Heart left ventricle (tissue), 16 donors: ENCODE measurements at regions of chr5 and their contacts with region 1.

Region 1: GRCh38 chr5:142548739-142549275 is 137.1 kb downstream of the FGF1 start:
- DNase-seq: peak in 4 of 5 donors; percentile 41 to 66 (median 60)
- ATAC-seq: peak; percentile 74 to 94 (median 86)
- H3K4me3 ChIP-seq: no peak overlapping the region
- H3K27ac ChIP-seq: peak overlapping the region in 2 of 12 donors; percentile 21 to 31
- H3K4me1 ChIP-seq: peaks cover 0 to 49% (median 20%) of the 10 kb centered on the region in 12 donors
- H3K27me3 ChIP-seq: peaks cover 0 to 27% (median 0%) of the 10 kb centered on the region in 9 donors
- CTCF ChIP-seq: peak; percentile 64 to 91 (median 78)
- POLR2A ChIP-seq: no peak

Region 2: DNA sequence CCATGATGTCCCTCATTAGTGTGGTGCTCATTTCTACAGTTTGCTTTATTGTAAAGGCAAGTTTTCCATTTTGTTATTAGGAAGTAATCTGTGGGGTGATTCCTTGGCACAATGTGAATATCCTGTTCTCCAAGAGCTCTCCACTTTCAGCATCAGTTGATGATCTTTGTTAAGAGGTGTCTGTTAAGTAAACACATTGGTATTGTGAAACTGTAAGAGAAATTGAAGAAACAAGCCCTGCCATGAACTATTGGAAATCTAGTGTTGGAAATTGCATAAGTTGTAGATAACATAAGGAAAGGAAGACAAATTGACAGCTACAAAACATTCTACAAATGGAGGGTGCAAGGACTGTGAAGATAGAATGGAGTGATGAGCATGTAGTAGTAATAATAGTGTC is 562.7 kb before region 1 on chr5:
- intact Hi-C with region 1: loop called in 3 of 10 experiments (anchors 10 kb)
- DNase-seq: no peak
- ATAC-seq: no peak
- H3K4me3 ChIP-seq: no peak overlapping the region
- H3K27ac ChIP-seq: no peak overlapping the region
- H3K4me1 ChIP-seq: no peaks in the 10 kb centered on the region
- H3K27me3 ChIP-seq: no peaks in the 10 kb centered on the region
- CTCF ChIP-seq: no peak
- POLR2A ChIP-seq: no peak

Region 3: GRCh38 chr5:142151436-142152383 is 397.1 kb before region 1 on chr5:
- intact Hi-C with region 1: loop called (anchors 1 to 5 kb)
- DNase-seq: peak in 3 of 5 donors; percentile 41 to 63 (median 52)
- ATAC-seq: peak in 3 of 4 donors; percentile 65 to 70 (median 66)
- H3K4me3 ChIP-seq: no peak overlapping the region
- H3K27ac ChIP-seq: peak overlapping the region in 1 of 12 donors; percentile 14
- H3K4me1 ChIP-seq: peaks cover 0 to 10% (median 3%) of the 10 kb centered on the region in 12 donors
- H3K27me3 ChIP-seq: no peaks in the 10 kb centered on the region
- CTCF ChIP-seq: peak; percentile 82 to 95 (median 88)
- POLR2A ChIP-seq: no peak

Region 4: DNA sequence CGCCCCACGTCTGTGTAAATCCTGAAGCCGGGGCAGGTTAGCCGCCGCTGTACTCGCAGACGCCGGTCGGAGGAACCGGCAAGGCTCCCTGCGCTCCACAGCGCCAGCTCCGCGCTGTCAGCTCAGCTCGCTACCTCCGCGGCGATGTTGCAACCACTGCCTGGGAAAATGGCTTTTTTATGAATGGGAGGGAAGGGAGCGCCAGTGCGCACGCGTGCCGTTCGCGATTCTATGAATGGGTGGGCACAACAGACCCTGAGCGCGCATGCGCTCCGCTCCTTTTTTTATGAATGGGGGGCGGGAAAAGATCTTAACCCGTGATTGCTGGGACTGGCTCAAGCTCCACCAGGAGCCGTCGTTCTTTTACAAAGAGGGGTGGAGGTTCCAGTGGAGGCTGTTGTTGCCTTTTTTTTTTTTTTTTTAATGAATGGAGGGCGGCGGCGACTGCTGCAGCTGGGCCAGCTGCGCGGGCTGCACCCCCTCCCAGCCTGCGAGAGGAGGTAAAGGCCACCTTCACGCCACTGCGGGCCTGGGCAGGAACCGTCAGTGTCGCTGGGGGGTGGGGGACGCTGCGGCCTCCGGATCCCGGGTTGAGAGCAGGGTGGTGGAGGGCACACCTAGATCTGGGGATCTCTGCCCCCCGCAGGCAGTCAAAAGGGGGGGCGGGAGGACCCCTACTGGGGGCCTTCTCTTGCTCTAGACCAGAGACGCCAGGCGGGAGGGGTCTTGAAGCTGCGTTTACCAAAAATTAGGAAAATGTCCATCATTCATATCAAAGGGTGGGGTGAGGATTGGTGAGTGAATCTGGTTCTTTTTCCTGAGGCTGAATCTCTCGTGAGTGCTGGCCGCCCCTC is 223.7 kb before region 1 on chr5 and contains the start of gene SPRY4:
- intact Hi-C with region 1: loop called (anchors 2 to 10 kb)
- DNase-seq: peak; percentile 93 to 96 (median 95)
- ATAC-seq: peak; percentile 78 to 87 (median 80)
- H3K4me3 ChIP-seq: peak within 1 kb of the TSS; percentile 59 to 99 (median 78)
- H3K27ac ChIP-seq: peak within 1 kb of the TSS; percentile 81 to 99 (median 91)
- H3K4me1 ChIP-seq: peaks cover 0 to 57% (median 39%) of the 10 kb centered on the region in 12 donors
- H3K27me3 ChIP-seq: peaks cover 0 to 54% (median 0%) of the 10 kb centered on the region in 9 donors
- CTCF ChIP-seq: peak in 4 of 12 donors; percentile 5 to 13 (median 6)
- POLR2A ChIP-seq: peak; percentile 14 to 93
- total RNA-seq, gene SPRY4: 4.5 to 21.3 (median 13.8) TPM

Region 5: GRCh38 chr5:142342128-142342981 is 206.5 kb before region 1 on chr5:
- intact Hi-C with region 1: no loop called
- DNase-seq: peak in 3 of 5 donors; percentile 40 to 50 (median 43)
- ATAC-seq: peak; percentile 47 to 97 (median 66)
- H3K4me3 ChIP-seq: no peak overlapping the region
- H3K27ac ChIP-seq: peak overlapping the region in 10 of 12 donors; percentile 4 to 67 (median 30)
- H3K4me1 ChIP-seq: peaks cover 0 to 10% (median 0%) of the 10 kb centered on the region in 12 donors
- H3K27me3 ChIP-seq: no peaks in the 10 kb centered on the region
- CTCF ChIP-seq: no peak
- POLR2A ChIP-seq: no peak

Region 6: GRCh38 chr5:142364251-142365145 is 184.3 kb before region 1 on chr5:
- intact Hi-C with region 1: loop called in 5 of 10 experiments (anchors 5 to 10 kb)
- DNase-seq: peak; percentile 65 to 82 (median 73)
- ATAC-seq: peak in 3 of 4 donors; percentile 32 to 53 (median 48)
- H3K4me3 ChIP-seq: peak overlapping the region in 8 of 12 donors; percentile 2 to 34 (median 24)
- H3K27ac ChIP-seq: peak overlapping the region in 11 of 12 donors; percentile 54 to 91 (median 85)
- H3K4me1 ChIP-seq: peaks cover 0 to 30% (median 21%) of the 10 kb centered on the region in 12 donors
- H3K27me3 ChIP-seq: peaks cover 0 to 25% (median 0%) of the 10 kb centered on the region in 9 donors
- CTCF ChIP-seq: no peak
- POLR2A ChIP-seq: no peak

Region 7: DNA sequence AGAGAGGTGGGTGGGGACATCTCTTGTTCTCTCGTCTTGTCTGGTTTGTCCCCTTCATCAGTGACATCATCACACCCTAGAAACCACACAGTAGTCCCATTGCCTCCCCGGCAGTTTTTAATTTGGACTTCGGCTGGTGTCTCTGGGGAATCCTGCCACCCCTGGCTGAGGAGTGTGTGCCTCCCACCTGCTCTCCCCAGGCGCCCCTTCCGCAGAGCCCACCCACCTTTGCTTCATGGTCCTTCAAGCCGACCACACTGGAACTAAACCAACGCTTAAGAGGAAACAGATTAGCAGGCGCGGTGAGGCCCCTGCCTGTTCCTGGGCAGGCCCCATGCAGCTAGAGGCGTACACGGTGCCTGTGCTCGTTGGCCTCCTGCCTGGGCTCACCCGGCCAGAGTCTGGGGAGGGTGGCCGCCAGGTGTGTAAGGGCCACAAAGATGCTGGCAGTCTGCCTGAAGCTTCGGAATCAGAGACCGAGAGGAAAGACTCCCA is 116.4 kb before region 1 on chr5:
- intact Hi-C with region 1: loop called in 9 of 10 experiments (anchors 5 to 10 kb)
- DNase-seq: peak in 2 of 5 donors; percentile 26 to 61
- ATAC-seq: peak in 2 of 4 donors; percentile 37 to 47
- H3K4me3 ChIP-seq: peak overlapping the region in 1 of 12 donors; percentile 10
- H3K27ac ChIP-seq: peak overlapping the region in 1 of 12 donors; percentile 71
- H3K4me1 ChIP-seq: peaks cover 0 to 53% (median 32%) of the 10 kb centered on the region in 12 donors
- H3K27me3 ChIP-seq: peaks cover 0 to 5% (median 0%) of the 10 kb centered on the region in 9 donors
- CTCF ChIP-seq: no peak
- POLR2A ChIP-seq: no peak

Region 8: GRCh38 chr5:142699184-142699720 is 150.4 kb after region 1 on chr5:
- intact Hi-C with region 1: loop called in 1 of 10 experiments (anchors 5 kb)
- DNase-seq: peak; percentile 89 to 92 (median 90)
- ATAC-seq: peak; percentile 80 to 89 (median 86)
- H3K4me3 ChIP-seq: no peak overlapping the region
- H3K27ac ChIP-seq: peak overlapping the region; percentile 79 to 96 (median 88)
- H3K4me1 ChIP-seq: peaks cover 7 to 51% (median 30%) of the 10 kb centered on the region in 12 donors
- H3K27me3 ChIP-seq: no peaks in the 10 kb centered on the region
- CTCF ChIP-seq: peak; percentile 95 to 99 (median 98)
- POLR2A ChIP-seq: no peak